IMR-90 (cell line): ENCODE measurements at regions of chr21 and their contacts with region 1.

Region 1: GRCh38 chr21:31347435-31348032 is 3.5 kb upstream of the TIAM1 start:
- DNase-seq: peak; percentile 50
- ATAC-seq: peak; percentile 43; the same call in 1 of the 2 replicates
- H3K4me3 ChIP-seq: no peak overlapping the region
- H3K27ac ChIP-seq: no peak overlapping the region
- H3K4me1 ChIP-seq: no peaks in the 10 kb centered on the region
- H3K27me3 ChIP-seq: peaks cover 31% of the 10 kb centered on the region
- CTCF ChIP-seq: peak; percentile 51
- POLR2A ChIP-seq: no peak
- RAD21 ChIP-seq: peak; percentile 45

Region 2: GRCh38 chr21:31360717-31361116 is 13.2 kb after region 1 on chr21:
- CTCF ChIA-PET with region 1: no interaction called
- POLR2A ChIA-PET with region 1: no interaction called
- dilution Hi-C with region 1: no loop called
- in situ Hi-C with region 1: no loop called
- intact Hi-C with region 1: no loop called
- DNase-seq: no peak
- ATAC-seq: no peak
- H3K4me3 ChIP-seq: no peak overlapping the region
- H3K27ac ChIP-seq: no peak overlapping the region
- H3K4me1 ChIP-seq: no peaks in the 10 kb centered on the region
- H3K27me3 ChIP-seq: peaks cover 2% of the 10 kb centered on the region
- CTCF ChIP-seq: no peak
- POLR2A ChIP-seq: no peak
- RAD21 ChIP-seq: no peak

Region 3: GRCh38 chr21:31580866-31581276 is 233.3 kb after region 1 on chr21:
- CTCF ChIA-PET with region 1: interaction called, 11 read pairs
- POLR2A ChIA-PET with region 1: no interaction called
- dilution Hi-C with region 1: no loop called
- in situ Hi-C with region 1: no loop called
- intact Hi-C with region 1: loop called (anchors 1 kb)
- DNase-seq: peak; percentile 61
- ATAC-seq: peak; percentile 100
- H3K4me3 ChIP-seq: no peak overlapping the region
- H3K27ac ChIP-seq: no peak overlapping the region
- H3K4me1 ChIP-seq: no peaks in the 10 kb centered on the region
- H3K27me3 ChIP-seq: peaks cover 2% of the 10 kb centered on the region
- CTCF ChIP-seq: peak; percentile 84
- POLR2A ChIP-seq: no peak
- RAD21 ChIP-seq: peak; percentile 84

Region 4: DNA sequence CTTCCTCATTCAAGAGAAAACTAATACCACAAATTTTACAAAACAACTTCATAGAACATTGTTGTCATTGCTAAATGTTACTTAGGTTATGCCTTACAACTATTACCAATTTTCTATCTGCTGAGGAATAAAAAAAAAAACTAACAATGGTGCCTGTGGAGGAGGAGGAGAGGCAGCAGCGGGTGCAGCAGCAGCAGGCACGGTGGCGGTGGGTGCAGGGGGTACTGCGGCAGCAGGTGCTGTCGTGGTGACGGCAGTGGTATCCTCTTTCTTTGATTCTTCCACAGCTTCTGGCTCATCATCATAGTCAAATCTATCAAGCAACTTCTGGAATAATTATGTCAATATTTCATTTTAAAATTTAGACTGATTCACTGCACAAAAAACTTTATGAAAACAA is 348.9 kb after region 1 on chr21:
- CTCF ChIA-PET with region 1: no interaction called
- POLR2A ChIA-PET with region 1: no interaction called
- dilution Hi-C with region 1: no loop called
- in situ Hi-C with region 1: no loop called
- intact Hi-C with region 1: no loop called
- DNase-seq: no peak
- ATAC-seq: no peak
- H3K4me3 ChIP-seq: no peak overlapping the region
- H3K27ac ChIP-seq: no peak overlapping the region
- H3K4me1 ChIP-seq: no peaks in the 10 kb centered on the region
- H3K27me3 ChIP-seq: no peaks in the 10 kb centered on the region
- CTCF ChIP-seq: no peak
- POLR2A ChIP-seq: no peak
- RAD21 ChIP-seq: no peak